ENCODE measurements at regions of chr3 and their contacts with region 1.

Region 1: GRCh38 chr3:33787328-33788009 is 11.0 kb upstream of the PDCD6IP start:
- DNase-seq: peak; percentile 38
- H3K4me3 Mint-ChIP-seq: no peak overlapping the region
- H3K27ac Mint-ChIP-seq: no peak overlapping the region
- H3K4me1 Mint-ChIP-seq: peaks cover 18% of the 10 kb centered on the region
- H3K27me3 Mint-ChIP-seq: peaks cover 18% of the 10 kb centered on the region

Region 2: GRCh38 chr3:33131331-33132018 is 656.0 kb before region 1 on chr3:
- intact Hi-C with region 1: loop called (anchors 1 kb)
- DNase-seq: peak; percentile 18
- H3K4me3 Mint-ChIP-seq: no peak overlapping the region
- H3K27ac Mint-ChIP-seq: no peak overlapping the region
- H3K4me1 Mint-ChIP-seq: peaks cover 7% of the 10 kb centered on the region
- H3K27me3 Mint-ChIP-seq: no peaks in the 10 kb centered on the region

Region 3: GRCh38 chr3:33482111-33482521 is 305.4 kb before region 1 on chr3:
- intact Hi-C with region 1: no loop called
- DNase-seq: no peak
- H3K4me3 Mint-ChIP-seq: no peak overlapping the region
- H3K27ac Mint-ChIP-seq: no peak overlapping the region
- H3K4me1 Mint-ChIP-seq: no peaks in the 10 kb centered on the region
- H3K27me3 Mint-ChIP-seq: no peaks in the 10 kb centered on the region

Region 4: GRCh38 chr3:33636125-33636850 is 151.2 kb before region 1 on chr3:
- intact Hi-C with region 1: loop called (anchors 1 kb)
- DNase-seq: no peak
- H3K4me3 Mint-ChIP-seq: no peak overlapping the region
- H3K27ac Mint-ChIP-seq: no peak overlapping the region
- H3K4me1 Mint-ChIP-seq: peaks cover 6% of the 10 kb centered on the region
- H3K27me3 Mint-ChIP-seq: no peaks in the 10 kb centered on the region

Region 5: GRCh38 chr3:34200576-34200975 is 413.1 kb after region 1 on chr3:
- intact Hi-C with region 1: no loop called
- DNase-seq: no peak
- H3K4me3 Mint-ChIP-seq: no peak overlapping the region
- H3K27ac Mint-ChIP-seq: no peak overlapping the region
- H3K4me1 Mint-ChIP-seq: no peaks in the 10 kb centered on the region
- H3K27me3 Mint-ChIP-seq: no peaks in the 10 kb centered on the region

Measured in activated T-helper 1 cell treated with anti-CD3 and anti-CD28 coated beads, Interleukin-12 subunit alpha, Interleukin-12 subunit beta, Interleukin-2, Interleukin-4 antibody, amounts not matched to agents 30 ng/mL and 10 ng/mL and 1 ng/mL, durations not matched to agents 14 hours and 24 hours and 36 hours (primary cell).